ENCODE measurements at regions of chr5 and their contacts with region 1.

Region 1: GRCh38 chr5:78294248-78295034 is at the start of gene AP3B1:
- H3K4me3 Mint-ChIP-seq: peak within 1 kb of the TSS; percentile 98
- H3K27ac Mint-ChIP-seq: peak within 1 kb of the TSS; percentile 100
- H3K4me1 Mint-ChIP-seq: peaks cover 50% of the 10 kb centered on the region
- H3K27me3 Mint-ChIP-seq: peaks cover 3% of the 10 kb centered on the region

Region 2: GRCh38 chr5:77775790-77776553 is 518.5 kb before region 1 on chr5 and contains the start of gene TBCA:
- intact Hi-C with region 1: loop called (anchors 10 kb)
- H3K4me3 Mint-ChIP-seq: peak within 1 kb of the TSS; percentile 100
- H3K27ac Mint-ChIP-seq: peak within 1 kb of the TSS; percentile 96
- H3K4me1 Mint-ChIP-seq: peaks cover 35% of the 10 kb centered on the region
- H3K27me3 Mint-ChIP-seq: no peaks in the 10 kb centered on the region

Region 3: GRCh38 chr5:78132507-78132906 is 161.9 kb before region 1 on chr5:
- intact Hi-C with region 1: no loop called
- H3K4me3 Mint-ChIP-seq: no peak overlapping the region
- H3K27ac Mint-ChIP-seq: no peak overlapping the region
- H3K4me1 Mint-ChIP-seq: no peaks in the 10 kb centered on the region
- H3K27me3 Mint-ChIP-seq: no peaks in the 10 kb centered on the region